Caco-2 (cell line): ENCODE measurements at regions of chr20 and their contacts with region 1.

Region 1: GRCh38 chr20:36109251-36109947 is 45.1 kb upstream of the EPB41L1 start:
- DNase-seq: no peak
- H3K4me3 ChIP-seq: no peak overlapping the region
- H3K4me3 Mint-ChIP-seq: no peak overlapping the region
- H3K27ac Mint-ChIP-seq: no peak overlapping the region
- H3K4me1 ChIP-seq: peaks cover 32% of the 10 kb centered on the region
- H3K4me1 Mint-ChIP-seq: peaks cover 17% of the 10 kb centered on the region
- H3K27me3 ChIP-seq: no peaks in the 10 kb centered on the region
- H3K27me3 Mint-ChIP-seq: no peaks in the 10 kb centered on the region
- CTCF ChIP-seq: no peak

Region 2: DNA sequence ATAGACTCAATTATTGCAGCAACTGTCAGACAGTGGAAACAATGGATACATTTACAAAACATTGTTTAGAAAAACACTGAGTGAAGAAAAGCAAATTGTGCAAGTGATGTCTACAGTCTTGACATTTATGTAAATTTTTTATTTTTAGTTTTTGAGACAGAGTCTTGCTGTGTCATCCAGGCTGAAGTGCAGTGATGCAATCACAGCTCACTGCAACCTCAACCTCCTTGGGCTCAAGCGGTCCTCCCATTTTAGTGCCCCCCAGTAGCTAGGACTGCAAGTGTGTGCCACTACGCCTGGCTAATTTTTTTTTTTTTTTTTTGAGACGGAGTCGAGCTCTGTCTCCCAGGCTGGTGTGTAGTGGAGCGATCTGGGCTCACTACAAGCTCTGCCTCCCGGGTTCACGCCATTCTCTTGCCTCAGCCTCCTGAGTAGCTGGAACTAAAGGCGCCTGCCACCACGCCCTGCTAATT is 131.3 kb before region 1 on chr20:
- CTCF ChIA-PET with region 1: no interaction called
- POLR2A ChIA-PET with region 1: interaction called, 10 read pairs
- intact Hi-C with region 1: no loop called
- DNase-seq: no peak
- H3K4me3 ChIP-seq: no peak overlapping the region
- H3K4me3 Mint-ChIP-seq: no peak overlapping the region
- H3K27ac Mint-ChIP-seq: no peak overlapping the region
- H3K4me1 ChIP-seq: no peaks in the 10 kb centered on the region
- H3K4me1 Mint-ChIP-seq: no peaks in the 10 kb centered on the region
- H3K27me3 ChIP-seq: 0 out of 2 replicates have a peak, but pooled peaks cover 1% of the 10 kb centered on the region
- H3K27me3 Mint-ChIP-seq: no peaks in the 10 kb centered on the region
- CTCF ChIP-seq: no peak

Region 3: DNA sequence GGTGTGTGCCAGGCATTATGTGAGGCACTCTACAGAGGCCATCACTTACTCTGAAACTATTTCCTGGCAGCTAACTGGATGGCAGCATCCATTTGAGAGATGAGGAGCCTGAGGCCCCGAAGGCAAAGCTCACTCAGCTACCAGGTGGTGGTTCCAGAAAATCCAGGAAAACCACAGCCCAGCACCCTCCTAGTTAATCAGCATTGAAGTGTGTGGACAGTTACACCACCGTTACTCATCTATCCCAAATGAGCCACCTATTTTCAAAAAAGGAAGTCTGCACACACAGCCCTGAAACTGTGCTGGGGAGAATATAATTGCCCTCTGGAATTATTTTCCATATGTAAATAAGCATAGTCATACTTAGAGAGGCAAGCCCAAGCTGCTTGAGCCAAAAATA is 73.7 kb before region 1 on chr20:
- CTCF ChIA-PET with region 1: no interaction called
- POLR2A ChIA-PET with region 1: no interaction called
- intact Hi-C with region 1: no loop called
- DNase-seq: no peak
- H3K4me3 ChIP-seq: no peak overlapping the region
- H3K4me3 Mint-ChIP-seq: no peak overlapping the region
- H3K27ac Mint-ChIP-seq: no peak overlapping the region
- H3K4me1 ChIP-seq: 0 out of 2 replicates have a peak, but pooled peaks cover 4% of the 10 kb centered on the region
- H3K4me1 Mint-ChIP-seq: peaks cover 19% of the 10 kb centered on the region
- H3K27me3 ChIP-seq: no peaks in the 10 kb centered on the region
- H3K27me3 Mint-ChIP-seq: no peaks in the 10 kb centered on the region
- CTCF ChIP-seq: no peak